T-cell (primary cell): ENCODE measurements at regions of chr12 and their contacts with region 1.

Region 1: GRCh38 chr12:43858096-43858495 is 22.2 kb downstream of the TMEM117 start:
- DNase-seq: no peak
- ATAC-seq: no peak
- H3K4me3 ChIP-seq: no peak overlapping the region
- H3K4me3 Mint-ChIP-seq: no peak overlapping the region
- H3K27ac ChIP-seq: no peak overlapping the region
- H3K27ac Mint-ChIP-seq: no peak overlapping the region
- H3K4me1 ChIP-seq: no peaks in the 10 kb centered on the region
- H3K4me1 Mint-ChIP-seq: no peaks in the 10 kb centered on the region
- H3K27me3 ChIP-seq: peaks cover 0 to 2% of the 10 kb centered on the region in 2 experiments
- H3K27me3 Mint-ChIP-seq: no peaks in the 10 kb centered on the region

Region 2: DNA sequence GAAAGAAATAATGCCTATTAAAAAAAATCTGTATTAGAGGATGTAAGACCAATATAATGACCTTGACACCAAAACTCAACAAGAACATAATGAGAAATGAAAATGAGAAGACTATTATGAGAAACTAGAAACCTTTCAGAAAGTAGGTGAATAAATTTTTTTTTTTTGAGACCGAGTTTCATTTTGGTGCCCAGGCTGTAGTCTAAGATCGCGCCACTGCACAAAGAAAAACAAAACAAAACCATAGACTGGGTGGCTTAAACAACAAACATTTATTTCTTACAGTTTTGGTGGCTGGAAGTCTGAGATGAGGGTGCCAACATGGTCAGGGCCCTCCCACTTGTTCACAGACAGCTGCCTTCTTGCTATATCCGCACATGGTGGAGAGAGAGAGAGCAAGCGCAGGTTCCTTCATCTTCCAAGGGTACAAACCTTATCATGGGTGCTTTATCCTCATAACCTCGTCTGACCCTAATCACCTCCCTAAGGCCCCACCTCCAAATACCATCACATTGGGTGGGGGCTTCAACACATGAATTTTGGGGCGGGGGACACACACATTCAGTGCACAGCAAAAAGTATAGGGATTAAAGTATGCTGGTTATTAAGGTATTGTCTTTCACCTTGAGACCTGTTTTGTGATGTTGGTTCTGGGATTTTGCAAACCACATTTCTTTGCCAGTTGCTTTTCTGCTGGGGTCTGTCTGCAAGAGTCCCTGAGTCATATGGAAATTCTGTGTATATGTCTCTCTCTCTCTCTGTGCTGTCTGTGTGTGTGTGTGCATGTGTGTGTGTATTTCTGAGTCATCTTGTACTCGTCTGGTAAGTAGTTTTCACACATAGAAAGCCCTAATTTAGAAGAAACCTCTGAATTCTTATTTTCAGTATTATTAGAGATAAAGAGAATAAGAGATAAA is 1558.4 kb before region 1 on chr12:
- CTCF ChIA-PET with region 1: interaction called in 1 of 2 experiments, 12 read pairs
- POLR2A ChIA-PET with region 1: no interaction called
- DNase-seq: peak in 6 of 35 experiments; percentile 4 to 24 (median 14)
- ATAC-seq: peak in 2 of 4 experiments; percentile 24 to 42
- H3K4me3 ChIP-seq: no peak overlapping the region
- H3K4me3 Mint-ChIP-seq: peak overlapping the region in 1 of 3 donors; percentile 58
- H3K27ac ChIP-seq: no peak overlapping the region
- H3K27ac Mint-ChIP-seq: peak overlapping the region in 1 of 2 donors; percentile 50
- H3K4me1 ChIP-seq: peaks cover 0 to 2% of the 10 kb centered on the region in 2 experiments
- H3K4me1 Mint-ChIP-seq: peaks cover 0 to 15% (median 8%) of the 10 kb centered on the region in 3 donors
- H3K27me3 ChIP-seq: no peaks in the 10 kb centered on the region
- H3K27me3 Mint-ChIP-seq: no peaks in the 10 kb centered on the region